Heart left ventricle (tissue), 16 donors: ENCODE measurements at regions of chr13 and their contacts with region 1.

Region 1: DNA sequence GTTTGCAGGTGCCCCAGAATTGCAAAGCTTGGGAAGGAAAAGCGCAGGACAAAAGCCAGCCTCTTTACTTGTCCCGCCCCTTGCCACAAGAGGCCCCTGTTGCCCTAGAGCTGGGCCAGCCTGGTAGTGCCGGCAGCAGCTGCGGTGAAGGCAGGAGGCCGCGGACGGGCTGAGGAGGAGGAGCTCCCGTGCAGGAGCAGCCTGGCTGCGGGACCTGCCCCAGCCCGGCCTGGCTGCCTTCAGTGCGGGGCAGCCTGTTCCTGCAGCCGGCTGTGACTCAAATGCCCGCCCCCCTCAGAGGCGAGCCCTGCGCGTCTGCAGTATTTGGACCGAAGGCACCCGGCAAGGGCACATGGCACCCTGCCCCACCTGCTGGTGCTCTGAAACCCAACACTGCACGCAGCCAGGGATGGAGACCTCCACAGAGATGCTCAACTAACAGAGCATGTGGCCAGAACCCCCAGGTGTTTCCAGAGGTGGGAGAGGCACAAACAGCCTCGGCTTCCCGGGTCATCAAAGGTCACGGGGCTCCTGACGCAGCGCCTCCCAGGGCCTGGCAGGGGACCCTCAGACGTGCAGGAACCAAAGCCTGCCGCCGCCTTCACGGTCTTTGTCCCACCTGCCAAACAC is 29.7 kb downstream of the NAXD start:
- DNase-seq: peak; percentile 59 to 81 (median 70)
- ATAC-seq: peak; percentile 35 to 77 (median 66)
- H3K4me3 ChIP-seq: no peak overlapping the region
- H3K27ac ChIP-seq: peak overlapping the region in 1 of 12 donors; percentile 51
- H3K4me1 ChIP-seq: peaks cover 0 to 33% (median 15%) of the 10 kb centered on the region in 12 donors
- H3K27me3 ChIP-seq: no peaks in the 10 kb centered on the region
- CTCF ChIP-seq: peak in 8 of 12 donors; percentile 6 to 48 (median 24)
- POLR2A ChIP-seq: no peak

Region 2: GRCh38 chr13:110593430-110594130 is 51.4 kb before region 1 on chr13:
- intact Hi-C with region 1: loop called in 1 of 10 experiments (anchors 2 kb)
- DNase-seq: no peak
- ATAC-seq: peak; percentile 81 to 94 (median 82)
- H3K4me3 ChIP-seq: no peak overlapping the region
- H3K27ac ChIP-seq: no peak overlapping the region
- H3K4me1 ChIP-seq: peaks cover 0 to 5% (median 0%) of the 10 kb centered on the region in 12 donors
- H3K27me3 ChIP-seq: no peaks in the 10 kb centered on the region
- CTCF ChIP-seq: peak; percentile 53 to 76 (median 64)
- POLR2A ChIP-seq: no peak